Activated naive CD4-positive, alpha-beta T cell treated with anti-CD3 and anti-CD28 coated beads for 36 hours (primary cell): ENCODE measurements at regions of chr15 and their contacts with region 1.

Region 1: GRCh38 chr15:62066663-62067447 is at the start of gene C2CD4A:
- DNase-seq: peak; percentile 75
- H3K4me3 Mint-ChIP-seq: peak within 1 kb of the TSS; percentile 73
- H3K27ac Mint-ChIP-seq: no peak within 1 kb of the TSS
- H3K4me1 Mint-ChIP-seq: peaks cover 33% of the 10 kb centered on the region
- H3K27me3 Mint-ChIP-seq: peaks cover 9% of the 10 kb centered on the region
- total RNA-seq, gene C2CD4A: 0.14 to 0.27 TPM

Region 2: GRCh38 chr15:61644550-61644949 is 422.3 kb before region 1 on chr15:
- CTCF ChIA-PET with region 1: no interaction called
- intact Hi-C with region 1: no loop called
- DNase-seq: no peak
- H3K4me3 Mint-ChIP-seq: no peak overlapping the region
- H3K27ac Mint-ChIP-seq: no peak overlapping the region
- H3K4me1 Mint-ChIP-seq: no peaks in the 10 kb centered on the region
- H3K27me3 Mint-ChIP-seq: peaks cover 24% of the 10 kb centered on the region

Region 3: DNA sequence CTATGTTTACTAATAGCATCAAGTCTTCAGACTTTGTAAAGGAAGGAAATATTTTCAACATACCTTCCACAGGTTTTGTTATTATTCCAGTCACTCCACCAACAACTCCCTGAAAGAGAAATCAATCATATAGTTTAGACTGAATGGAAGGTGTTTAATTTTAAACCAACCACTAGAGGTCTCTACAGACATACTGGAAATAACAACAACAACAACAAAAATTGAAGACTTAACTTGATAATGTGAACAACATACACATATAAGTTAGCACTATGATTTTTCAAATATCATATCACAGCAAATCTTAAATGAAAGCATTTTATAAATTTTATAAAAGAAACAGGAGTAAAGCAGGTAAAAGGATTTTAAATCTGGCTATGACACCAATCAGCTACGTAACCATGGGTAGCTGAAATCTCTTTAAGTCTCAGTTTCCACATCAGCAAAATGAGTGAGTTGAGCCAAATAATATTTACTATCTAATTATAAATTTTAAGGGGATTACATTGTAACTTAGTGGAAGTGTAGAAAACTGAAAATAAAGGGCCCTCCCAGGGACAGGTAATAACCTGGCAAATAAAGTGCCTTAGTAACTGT is 194.8 kb before region 1 on chr15:
- CTCF ChIA-PET with region 1: interaction called, 3 read pairs
- intact Hi-C with region 1: loop called (anchors 1 kb)
- DNase-seq: no peak
- H3K4me3 Mint-ChIP-seq: no peak overlapping the region
- H3K27ac Mint-ChIP-seq: no peak overlapping the region
- H3K4me1 Mint-ChIP-seq: no peaks in the 10 kb centered on the region
- H3K27me3 Mint-ChIP-seq: no peaks in the 10 kb centered on the region

Region 4: DNA sequence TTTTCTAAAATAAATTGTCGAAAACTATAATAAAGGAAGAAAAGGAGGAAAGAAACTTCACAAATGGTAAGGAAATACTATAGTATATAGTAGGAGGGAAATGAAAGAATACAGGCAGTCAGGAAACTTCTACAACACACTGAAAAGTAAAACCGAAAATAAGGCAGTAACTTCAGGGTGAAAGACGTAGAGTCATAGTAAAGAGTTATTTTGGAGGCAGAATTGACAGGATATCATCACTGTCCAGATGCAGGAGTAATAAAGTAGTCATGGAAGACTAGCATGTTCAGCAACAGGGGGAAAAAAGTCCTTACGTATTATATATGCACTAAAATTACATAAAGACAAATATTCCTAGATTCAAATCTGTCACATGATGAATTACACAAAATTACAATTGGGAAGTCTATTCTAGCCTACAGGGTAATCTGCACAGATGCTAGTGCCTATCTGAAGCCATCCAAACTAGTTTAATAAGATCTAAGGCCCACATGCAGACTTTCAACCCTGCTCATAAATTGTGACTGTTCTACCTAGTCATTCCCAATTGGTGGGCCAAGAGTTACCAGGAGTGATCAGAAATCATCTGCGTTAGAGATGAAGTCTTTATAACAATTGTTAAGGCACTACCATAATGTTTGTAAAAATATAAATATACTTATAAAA is 20.6 kb before region 1 on chr15:
- CTCF ChIA-PET with region 1: no interaction called
- intact Hi-C with region 1: no loop called
- DNase-seq: no peak
- H3K4me3 Mint-ChIP-seq: peak overlapping the region; percentile 5
- H3K27ac Mint-ChIP-seq: peak overlapping the region; percentile 0
- H3K4me1 Mint-ChIP-seq: peaks cover 24% of the 10 kb centered on the region
- H3K27me3 Mint-ChIP-seq: no peaks in the 10 kb centered on the region

Region 5: DNA sequence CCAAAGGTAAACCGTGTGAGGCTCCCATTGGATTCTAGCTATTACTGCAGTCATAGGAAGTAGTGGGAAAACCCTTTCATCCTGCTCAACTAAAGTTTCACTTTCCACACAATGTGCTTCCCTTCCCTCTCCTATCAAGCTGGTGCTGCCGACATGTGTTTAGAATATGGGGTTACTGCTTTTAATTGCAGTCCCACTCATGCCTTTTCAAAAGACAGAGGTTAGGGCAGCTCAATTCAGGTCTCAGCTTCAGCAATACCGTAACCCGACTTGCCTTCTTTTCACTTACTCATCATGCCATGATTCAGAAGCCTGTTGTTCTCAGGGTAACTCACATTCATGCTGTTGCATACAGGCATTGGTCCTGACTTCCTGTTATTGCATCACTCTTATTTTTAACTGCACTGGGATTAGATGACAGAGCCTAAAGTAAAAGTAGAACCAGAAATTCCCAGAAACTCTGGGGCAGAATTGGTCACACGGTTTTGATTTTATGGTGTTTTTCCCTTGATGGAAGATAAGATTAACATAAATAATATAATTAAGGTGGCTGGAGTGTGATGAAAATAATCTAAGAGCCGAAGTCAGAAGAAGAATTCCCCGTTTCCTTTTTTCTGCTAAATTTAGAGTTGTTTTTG is 52.5 kb after region 1 on chr15:
- CTCF ChIA-PET with region 1: interaction called, 4 read pairs
- intact Hi-C with region 1: loop called (anchors 2 kb)
- DNase-seq: peak; percentile 53
- H3K4me3 Mint-ChIP-seq: peak overlapping the region; percentile 23
- H3K27ac Mint-ChIP-seq: peak overlapping the region; percentile 83
- H3K4me1 Mint-ChIP-seq: peaks cover 43% of the 10 kb centered on the region
- H3K27me3 Mint-ChIP-seq: peaks cover 4% of the 10 kb centered on the region

Region 6: GRCh38 chr15:62150445-62150844 is 83.6 kb after region 1 on chr15:
- CTCF ChIA-PET with region 1: no interaction called
- intact Hi-C with region 1: loop called (anchors 5 kb)
- DNase-seq: no peak
- H3K4me3 Mint-ChIP-seq: no peak overlapping the region
- H3K27ac Mint-ChIP-seq: no peak overlapping the region
- H3K4me1 Mint-ChIP-seq: peaks cover 37% of the 10 kb centered on the region
- H3K27me3 Mint-ChIP-seq: peaks cover 4% of the 10 kb centered on the region

Region 7: DNA sequence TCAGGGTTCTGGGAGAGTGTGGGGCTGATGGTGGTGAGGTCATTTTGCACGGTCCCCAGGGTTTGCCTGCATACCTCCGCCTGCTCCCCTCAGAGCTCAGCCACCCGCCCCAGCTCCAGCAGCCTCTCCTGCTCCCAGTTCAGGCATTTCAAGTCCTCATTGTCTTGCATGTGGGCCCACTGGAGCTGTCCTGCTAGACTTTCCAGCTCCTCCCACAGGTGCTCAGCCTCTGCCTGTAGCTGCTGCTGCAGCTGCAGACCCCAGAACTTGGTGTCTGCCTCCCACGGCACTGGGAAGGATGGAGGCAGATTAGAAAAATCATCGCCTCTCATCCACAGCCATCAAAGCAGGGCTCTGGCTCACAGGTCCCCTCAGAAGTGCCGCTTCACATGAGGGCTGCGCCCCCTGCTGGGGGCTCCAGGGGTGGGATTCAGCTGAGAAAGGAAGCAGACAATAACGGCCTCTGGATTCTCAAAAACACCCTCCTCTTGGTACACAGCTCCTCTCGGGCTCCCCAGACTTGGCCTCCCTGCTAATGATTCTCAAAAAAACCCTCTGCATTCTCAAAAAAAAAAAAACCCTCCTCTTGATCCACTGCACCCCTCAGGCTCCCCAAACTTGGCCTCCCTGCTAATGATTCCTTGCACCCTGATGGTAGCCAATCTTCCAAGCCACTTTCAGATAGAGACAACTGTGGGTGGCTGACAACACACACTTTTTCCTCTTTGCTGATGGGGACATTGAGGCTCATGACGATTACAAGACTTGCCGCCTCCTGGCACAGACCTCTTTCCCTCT is 187.5 kb after region 1 on chr15:
- CTCF ChIA-PET with region 1: interaction called, 5 read pairs
- intact Hi-C with region 1: loop called (anchors 5 kb)
- DNase-seq: peak; percentile 79
- H3K4me3 Mint-ChIP-seq: no peak overlapping the region
- H3K27ac Mint-ChIP-seq: no peak overlapping the region
- H3K4me1 Mint-ChIP-seq: no peaks in the 10 kb centered on the region
- H3K27me3 Mint-ChIP-seq: peaks cover 12% of the 10 kb centered on the region

Region 8: DNA sequence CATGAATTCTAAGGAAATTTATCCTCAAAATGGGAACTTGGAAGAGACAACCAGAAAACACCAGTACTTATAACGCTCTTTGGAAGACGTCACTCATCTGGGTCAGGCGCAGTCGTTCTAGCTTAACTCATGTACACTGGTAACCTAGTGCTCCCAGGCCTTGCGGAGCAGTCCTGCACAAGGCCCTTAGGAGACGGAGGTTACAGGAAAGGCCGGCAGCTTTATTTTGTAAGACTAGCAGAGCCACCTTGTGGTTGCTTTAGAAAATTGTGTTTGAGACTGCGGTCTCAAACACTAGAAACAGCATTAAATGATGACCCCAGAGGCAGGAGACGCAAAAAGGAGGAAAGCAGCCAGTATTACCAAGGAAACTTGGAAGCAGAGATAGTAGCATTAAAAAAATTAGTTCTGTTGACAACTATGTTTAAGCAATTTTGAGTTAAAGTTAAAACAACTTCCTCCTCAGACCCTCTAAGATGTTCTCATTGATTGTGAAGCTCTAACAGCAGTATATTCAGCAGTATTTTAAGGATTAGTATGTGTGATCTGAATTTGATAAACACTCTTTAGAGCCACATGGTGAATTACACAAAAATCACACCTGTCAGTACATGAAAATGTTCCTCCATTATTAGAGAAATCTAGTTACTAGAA is 240.1 kb after region 1 on chr15:
- CTCF ChIA-PET with region 1: no interaction called
- intact Hi-C with region 1: loop called (anchors 5 kb)
- DNase-seq: peak; percentile 14
- H3K4me3 Mint-ChIP-seq: no peak overlapping the region
- H3K27ac Mint-ChIP-seq: no peak overlapping the region
- H3K4me1 Mint-ChIP-seq: peaks cover 6% of the 10 kb centered on the region
- H3K27me3 Mint-ChIP-seq: peaks cover 32% of the 10 kb centered on the region